ENCODE measurements at regions of chrX and their contacts with region 1.

Region 1: DNA sequence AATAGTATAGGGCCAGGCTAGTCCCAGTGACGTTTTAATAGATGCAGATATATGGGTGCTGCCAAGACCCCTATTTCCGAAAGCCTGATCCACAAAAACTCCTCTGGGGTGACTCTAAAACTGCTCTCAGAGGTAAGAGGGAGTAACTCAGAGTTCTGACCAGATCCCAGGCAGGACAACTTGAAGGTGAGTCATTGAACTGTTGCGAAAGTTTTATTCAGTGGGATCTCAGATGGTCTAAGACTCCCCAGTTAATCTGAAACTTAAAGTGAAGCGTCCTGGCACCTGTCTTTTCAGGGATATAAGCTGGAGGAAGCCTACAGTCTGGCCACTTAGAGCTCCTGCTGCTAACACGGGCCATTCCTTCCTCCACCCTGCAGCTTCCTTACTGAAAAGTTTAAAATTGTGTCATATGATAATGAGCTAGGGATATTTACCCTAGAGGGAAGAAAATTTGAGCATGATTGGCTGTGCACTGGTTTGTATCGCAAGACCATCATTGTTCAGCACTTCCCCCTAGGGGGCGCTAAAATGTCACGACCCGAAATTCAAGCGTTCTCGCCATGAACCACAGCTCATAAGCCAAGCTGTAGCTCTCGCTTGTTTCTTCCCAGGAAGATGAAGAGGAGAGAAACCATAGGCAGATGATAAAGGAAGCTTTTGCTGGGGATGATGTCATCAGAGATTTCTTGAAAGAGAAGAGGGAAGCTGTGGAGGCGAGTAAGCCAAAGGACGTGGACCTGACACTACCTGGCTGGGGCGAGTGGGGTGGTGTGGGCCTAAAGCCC is 19.5 kb downstream of the UTP14A start:
- DNase-seq: peak; percentile 56
- H3K4me3 Mint-ChIP-seq: no peak overlapping the region
- H3K27ac Mint-ChIP-seq: no peak overlapping the region
- H3K4me1 Mint-ChIP-seq: peaks cover 8% of the 10 kb centered on the region
- H3K27me3 Mint-ChIP-seq: no peaks in the 10 kb centered on the region

Region 2: DNA sequence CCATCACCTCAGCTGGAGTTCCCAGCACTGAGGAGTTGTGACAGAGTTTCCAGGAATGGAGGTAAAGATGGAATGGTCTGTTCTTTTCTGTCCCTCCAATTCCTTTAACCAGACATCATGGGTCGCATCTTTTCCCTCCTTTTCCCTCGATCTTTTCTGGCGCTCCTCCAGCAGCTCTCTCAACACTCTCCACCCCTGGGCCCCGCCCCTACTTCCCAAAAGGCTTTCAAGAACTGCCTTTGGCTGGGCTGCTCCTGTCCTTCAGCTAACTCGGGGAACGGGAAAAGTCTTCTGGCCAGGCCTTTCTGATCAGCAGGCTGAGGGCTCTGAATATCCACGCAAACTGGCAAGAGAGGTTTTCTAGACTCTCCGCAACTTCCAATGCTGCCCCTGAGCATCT is 14.5 kb after region 1 on chrX:
- intact Hi-C with region 1: no loop called
- DNase-seq: no peak
- H3K4me3 Mint-ChIP-seq: no peak overlapping the region
- H3K27ac Mint-ChIP-seq: no peak overlapping the region
- H3K4me1 Mint-ChIP-seq: peaks cover 7% of the 10 kb centered on the region
- H3K27me3 Mint-ChIP-seq: peaks cover 12% of the 10 kb centered on the region

Region 3: GRCh38 chrX:130024127-130024526 is 98.6 kb after region 1 on chrX:
- intact Hi-C with region 1: loop called (anchors 1 kb)
- DNase-seq: peak; percentile 78
- H3K4me3 Mint-ChIP-seq: peak overlapping the region; percentile 60
- H3K27ac Mint-ChIP-seq: peak overlapping the region; percentile 44
- H3K4me1 Mint-ChIP-seq: peaks cover 14% of the 10 kb centered on the region
- H3K27me3 Mint-ChIP-seq: no peaks in the 10 kb centered on the region

Region 4: DNA sequence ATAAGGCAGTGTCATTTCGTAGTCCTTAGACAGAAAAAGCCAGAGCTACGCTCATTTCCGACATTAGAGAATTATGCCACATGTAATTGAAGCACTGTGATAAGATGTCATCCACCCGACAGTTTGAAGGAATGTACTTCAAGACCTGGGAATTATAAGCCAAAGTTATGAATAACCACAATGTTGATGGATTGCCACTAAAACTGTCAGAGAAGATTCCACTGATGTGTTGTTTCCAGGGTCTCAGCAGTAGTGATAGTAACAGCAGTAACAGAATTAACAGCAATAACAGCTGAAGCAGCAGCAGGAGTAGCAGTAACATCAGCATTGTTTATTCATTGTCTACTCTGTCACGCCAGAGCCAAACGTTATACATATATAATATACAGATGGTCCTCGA is 271.0 kb after region 1 on chrX:
- intact Hi-C with region 1: loop called (anchors 1 kb)
- DNase-seq: no peak
- H3K4me3 Mint-ChIP-seq: no peak overlapping the region
- H3K27ac Mint-ChIP-seq: no peak overlapping the region
- H3K4me1 Mint-ChIP-seq: peaks cover 4% of the 10 kb centered on the region
- H3K27me3 Mint-ChIP-seq: peaks cover 2% of the 10 kb centered on the region

Region 5: DNA sequence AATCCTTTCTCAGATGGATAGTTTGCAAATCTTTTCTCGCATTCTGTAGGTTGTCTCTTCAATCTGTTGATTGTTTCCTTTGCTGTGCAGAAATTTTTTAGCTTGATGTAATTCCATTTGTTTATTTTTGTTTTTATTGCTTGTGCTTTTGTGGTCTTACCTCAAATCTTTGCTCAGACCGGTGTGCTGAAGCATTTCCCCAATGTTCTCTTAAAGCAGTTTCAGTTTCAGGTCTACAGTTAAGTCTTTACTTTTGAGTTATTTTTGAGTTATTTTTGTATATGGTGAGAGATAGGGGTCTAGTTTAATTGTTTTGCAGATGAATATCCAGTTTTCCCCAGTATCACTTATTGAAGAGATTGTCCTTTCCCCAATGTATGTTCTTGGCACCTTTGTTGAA is 396.1 kb after region 1 on chrX:
- intact Hi-C with region 1: no loop called
- DNase-seq: no peak
- H3K4me3 Mint-ChIP-seq: no peak overlapping the region
- H3K27ac Mint-ChIP-seq: no peak overlapping the region
- H3K4me1 Mint-ChIP-seq: peaks cover 9% of the 10 kb centered on the region
- H3K27me3 Mint-ChIP-seq: peaks cover 12% of the 10 kb centered on the region

Region 6: GRCh38 chrX:131812836-131813825 is 1887.6 kb after region 1 on chrX:
- intact Hi-C with region 1: loop called (anchors 5 kb)
- DNase-seq: peak; percentile 63
- H3K4me3 Mint-ChIP-seq: peak overlapping the region; percentile 76
- H3K27ac Mint-ChIP-seq: peak overlapping the region; percentile 89
- H3K4me1 Mint-ChIP-seq: peaks cover 36% of the 10 kb centered on the region
- H3K27me3 Mint-ChIP-seq: no peaks in the 10 kb centered on the region

Measured in activated T-helper 1 cell treated with anti-CD3 and anti-CD28 coated beads, Interleukin-12 subunit alpha, Interleukin-12 subunit beta, Interleukin-2, Interleukin-4 antibody, amounts not matched to agents 30 ng/mL and 10 ng/mL and 1 ng/mL, durations not matched to agents 14 hours and 24 hours and 36 hours (primary cell).